ENCODE measurements at regions of chr3 and their contacts with region 1.

Region 1: GRCh38 chr3:62926494-62926893 is 51.3 kb upstream of the CADPS start:
- DNase-seq: peak; percentile 65
- ATAC-seq: peak; percentile 99
- H3K4me3 Mint-ChIP-seq: no peak overlapping the region
- H3K27ac Mint-ChIP-seq: no peak overlapping the region
- H3K4me1 Mint-ChIP-seq: peaks cover 23% of the 10 kb centered on the region
- H3K27me3 Mint-ChIP-seq: no peaks in the 10 kb centered on the region; the same call in none of the 2 replicates
- CTCF ChIP-seq: no peak

Region 2: GRCh38 chr3:62833531-62833930 is 93.0 kb before region 1 on chr3:
- CTCF ChIA-PET with region 1: interaction called, 12 read pairs
- POLR2A ChIA-PET with region 1: no interaction called
- DNase-seq: no peak
- ATAC-seq: peak; percentile 85
- H3K4me3 Mint-ChIP-seq: no peak overlapping the region
- H3K27ac Mint-ChIP-seq: no peak overlapping the region
- H3K4me1 Mint-ChIP-seq: no peaks in the 10 kb centered on the region
- H3K27me3 Mint-ChIP-seq: no peaks in the 10 kb centered on the region
- CTCF ChIP-seq: peak; percentile 33; the same call in 1 of the 2 replicates

Region 3: GRCh38 chr3:62911526-62911925 is 15.0 kb before region 1 on chr3:
- CTCF ChIA-PET with region 1: no interaction called
- POLR2A ChIA-PET with region 1: no interaction called
- DNase-seq: no peak
- ATAC-seq: no peak
- H3K4me3 Mint-ChIP-seq: no peak overlapping the region
- H3K27ac Mint-ChIP-seq: no peak overlapping the region
- H3K4me1 Mint-ChIP-seq: 0 out of 2 replicates have a peak, but pooled peaks cover 3% of the 10 kb centered on the region
- H3K27me3 Mint-ChIP-seq: no peaks in the 10 kb centered on the region
- CTCF ChIP-seq: no peak

Region 4: GRCh38 chr3:63290686-63291085 is 364.2 kb after region 1 on chr3:
- CTCF ChIA-PET with region 1: no interaction called
- POLR2A ChIA-PET with region 1: no interaction called
- DNase-seq: no peak
- ATAC-seq: no peak
- H3K4me3 Mint-ChIP-seq: no peak overlapping the region
- H3K27ac Mint-ChIP-seq: no peak overlapping the region
- H3K4me1 Mint-ChIP-seq: peaks cover 26% of the 10 kb centered on the region
- H3K27me3 Mint-ChIP-seq: peaks cover 19% of the 10 kb centered on the region
- CTCF ChIP-seq: no peak